Activated CD4-positive, alpha-beta memory T cell treated with anti-CD3 and anti-CD28 coated beads, Interleukin-2, amount 10 ng/mL, durations not matched to agents 7 days and 5 days (primary cell): ENCODE measurements at regions of chr6 and their contacts with region 1.

Region 1: GRCh38 chr6:53290537-53291510 is 57.9 kb downstream of the ELOVL5 start:
- DNase-seq: no peak
- H3K4me3 Mint-ChIP-seq: peak overlapping the region; percentile 1
- H3K27ac Mint-ChIP-seq: peak overlapping the region; percentile 63
- H3K4me1 Mint-ChIP-seq: peaks cover 58% of the 10 kb centered on the region
- H3K27me3 Mint-ChIP-seq: no peaks in the 10 kb centered on the region

Region 2: DNA sequence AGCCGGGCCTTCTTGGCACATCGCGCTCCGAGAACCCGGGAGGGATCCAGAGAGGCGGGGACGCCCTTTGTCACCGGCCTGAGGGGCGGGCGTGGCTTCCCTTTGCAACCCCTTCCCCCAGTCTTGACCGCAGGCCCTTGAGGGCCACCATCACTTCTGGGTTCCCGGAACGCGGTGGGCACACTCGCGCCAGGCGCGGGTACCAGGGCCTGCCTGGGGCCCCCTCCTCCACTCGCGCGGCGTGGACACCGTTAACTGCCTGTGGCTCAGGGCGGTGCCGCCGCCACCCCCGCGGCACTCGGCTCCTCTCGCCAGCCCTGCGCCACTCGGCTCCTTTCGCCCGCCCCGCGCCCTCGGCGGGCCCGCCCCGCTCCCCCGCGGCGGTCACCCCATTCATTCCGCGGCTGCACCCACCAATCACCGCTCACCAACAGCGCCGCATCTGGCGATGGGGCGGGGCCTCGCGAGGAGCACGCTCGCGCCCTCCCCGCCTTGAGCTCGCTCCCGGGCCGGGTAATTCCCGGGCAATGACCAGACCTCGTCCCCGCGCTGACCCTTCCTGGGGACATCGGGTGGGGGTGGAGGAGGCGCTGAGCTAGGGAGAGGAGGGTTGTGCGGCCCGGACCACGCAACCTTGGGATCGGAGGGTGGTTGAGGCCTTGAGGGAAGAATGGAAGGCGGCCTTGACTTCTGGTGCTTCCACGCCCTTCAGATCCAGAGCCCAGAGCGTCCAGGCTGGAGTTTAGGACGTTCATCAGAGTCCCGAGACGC is 68.4 kb after region 1 on chr6:
- CTCF ChIA-PET with region 1: no interaction called
- POLR2A ChIA-PET with region 1: interaction called, 14 read pairs
- DNase-seq: peak; percentile 95
- H3K4me3 Mint-ChIP-seq: peak overlapping the region; percentile 87
- H3K27ac Mint-ChIP-seq: peak overlapping the region; percentile 97
- H3K4me1 Mint-ChIP-seq: peaks cover 48% of the 10 kb centered on the region
- H3K27me3 Mint-ChIP-seq: peaks cover 3% of the 10 kb centered on the region